CD8-positive, alpha-beta T cell (primary cell): ENCODE measurements at regions of chr3 and their contacts with region 1.

Region 1: DNA sequence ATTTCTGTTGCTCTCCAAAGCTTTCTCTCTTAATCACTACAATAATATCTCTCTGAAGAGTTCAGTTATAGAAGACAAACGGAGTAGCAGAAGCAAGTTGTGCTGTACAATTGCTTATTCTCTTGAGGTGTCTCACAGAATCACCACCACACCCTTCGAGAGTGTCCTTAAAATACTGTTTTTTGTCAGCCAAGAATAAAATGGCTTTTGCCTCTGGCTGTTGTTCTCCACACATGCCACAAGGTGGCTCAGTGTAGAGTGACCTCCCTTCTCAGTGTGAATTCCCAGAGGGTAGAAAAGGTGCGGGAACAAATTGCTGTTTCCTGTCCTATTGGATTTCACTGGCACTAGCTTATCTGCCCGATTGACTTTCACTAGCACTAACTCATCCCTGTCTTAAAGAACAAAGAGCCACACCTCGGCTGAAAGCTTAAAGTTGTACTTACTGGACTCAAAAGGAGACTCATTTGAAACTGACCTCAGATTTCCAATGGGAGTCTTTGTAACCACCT is 134.2 kb upstream of the SATB1 start:
- DNase-seq: peak in 5 of 9 experiments; percentile 28 to 73 (median 59)
- ATAC-seq: peak; percentile 39
- H3K4me3 ChIP-seq: no peak overlapping the region
- H3K4me3 Mint-ChIP-seq: peak overlapping the region; percentile 44
- H3K27ac ChIP-seq: no peak overlapping the region
- H3K27ac Mint-ChIP-seq: peak overlapping the region; percentile 69
- H3K4me1 ChIP-seq: peaks cover 25% of the 10 kb centered on the region
- H3K4me1 Mint-ChIP-seq: peaks cover 54% of the 10 kb centered on the region
- H3K27me3 ChIP-seq: no peaks in the 10 kb centered on the region
- H3K27me3 Mint-ChIP-seq: no peaks in the 10 kb centered on the region
- CTCF ChIP-seq: peak; percentile 73

Region 2: GRCh38 chr3:18351823-18352744 is 207.3 kb before region 1 on chr3:
- CTCF ChIA-PET with region 1: no interaction called
- POLR2A ChIA-PET with region 1: no interaction called
- intact Hi-C with region 1: loop called in 1 of 2 experiments (anchors 5 kb)
- DNase-seq: no peak
- ATAC-seq: no peak
- H3K4me3 ChIP-seq: no peak overlapping the region
- H3K4me3 Mint-ChIP-seq: no peak overlapping the region
- H3K27ac ChIP-seq: no peak overlapping the region
- H3K27ac Mint-ChIP-seq: peak overlapping the region; percentile 86
- H3K4me1 ChIP-seq: peaks cover 12% of the 10 kb centered on the region
- H3K4me1 Mint-ChIP-seq: peaks cover 55% of the 10 kb centered on the region
- H3K27me3 ChIP-seq: no peaks in the 10 kb centered on the region
- H3K27me3 Mint-ChIP-seq: no peaks in the 10 kb centered on the region
- CTCF ChIP-seq: no peak

Region 3: GRCh38 chr3:18454766-18455165 is 104.6 kb before region 1 on chr3:
- CTCF ChIA-PET with region 1: interaction called, 6 read pairs
- POLR2A ChIA-PET with region 1: no interaction called
- intact Hi-C with region 1: loop called (anchors 2 to 5 kb)
- DNase-seq: no peak
- ATAC-seq: no peak
- H3K4me3 ChIP-seq: no peak overlapping the region
- H3K4me3 Mint-ChIP-seq: no peak overlapping the region
- H3K27ac ChIP-seq: no peak overlapping the region
- H3K27ac Mint-ChIP-seq: no peak overlapping the region
- H3K4me1 ChIP-seq: peaks cover 11% of the 10 kb centered on the region
- H3K4me1 Mint-ChIP-seq: peaks cover 65% of the 10 kb centered on the region
- H3K27me3 ChIP-seq: no peaks in the 10 kb centered on the region
- H3K27me3 Mint-ChIP-seq: no peaks in the 10 kb centered on the region
- CTCF ChIP-seq: no peak

Region 4: GRCh38 chr3:18531662-18532236 is 27.6 kb before region 1 on chr3:
- CTCF ChIA-PET with region 1: interaction called, 5 read pairs
- POLR2A ChIA-PET with region 1: no interaction called
- intact Hi-C with region 1: loop called in 1 of 2 experiments (anchors 2 kb)
- DNase-seq: no peak
- ATAC-seq: no peak
- H3K4me3 ChIP-seq: no peak overlapping the region
- H3K4me3 Mint-ChIP-seq: no peak overlapping the region
- H3K27ac ChIP-seq: no peak overlapping the region
- H3K27ac Mint-ChIP-seq: no peak overlapping the region
- H3K4me1 ChIP-seq: no peaks in the 10 kb centered on the region
- H3K4me1 Mint-ChIP-seq: peaks cover 10% of the 10 kb centered on the region
- H3K27me3 ChIP-seq: no peaks in the 10 kb centered on the region
- H3K27me3 Mint-ChIP-seq: no peaks in the 10 kb centered on the region
- CTCF ChIP-seq: no peak

Region 5: DNA sequence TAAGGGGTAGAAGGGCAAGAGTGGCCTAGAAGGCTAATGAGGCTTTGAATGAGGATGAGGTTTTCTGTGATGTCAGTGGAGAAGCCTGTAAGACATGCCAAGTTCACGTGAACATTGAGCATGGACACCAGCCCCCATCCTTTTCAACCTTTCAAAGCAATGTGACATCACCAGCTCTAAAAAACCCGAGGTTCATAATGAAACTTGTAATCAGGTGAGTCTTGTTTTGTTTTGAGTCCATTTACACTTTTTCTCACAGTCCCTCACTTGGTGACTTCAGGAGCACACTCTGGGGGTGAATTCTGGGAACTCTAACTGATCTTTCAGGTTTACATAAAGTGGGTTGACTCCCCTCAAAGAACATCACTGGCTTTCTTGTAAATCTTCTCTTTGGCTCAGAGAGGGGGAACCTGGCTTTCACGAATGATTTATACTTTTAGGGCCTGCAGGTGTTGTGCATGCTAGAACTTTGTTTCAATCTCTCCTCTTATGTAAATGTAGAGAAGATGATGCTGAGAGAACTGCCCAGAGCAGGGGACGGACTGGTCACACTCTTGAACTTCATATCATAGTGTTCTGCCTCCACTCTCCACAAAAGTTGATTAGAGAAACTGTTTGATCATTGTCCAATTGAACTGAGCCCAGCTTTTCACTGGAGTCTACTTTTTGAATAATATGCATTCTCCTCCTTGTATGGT is 90.4 kb after region 1 on chr3:
- CTCF ChIA-PET with region 1: no interaction called
- POLR2A ChIA-PET with region 1: no interaction called
- intact Hi-C with region 1: loop called in 1 of 2 experiments (anchors 10 kb)
- DNase-seq: peak in 4 of 9 experiments; percentile 13 to 50 (median 27)
- ATAC-seq: peak; percentile 61
- H3K4me3 ChIP-seq: no peak overlapping the region
- H3K4me3 Mint-ChIP-seq: peak overlapping the region; percentile 7
- H3K27ac ChIP-seq: no peak overlapping the region
- H3K27ac Mint-ChIP-seq: peak overlapping the region; percentile 64
- H3K4me1 ChIP-seq: peaks cover 10% of the 10 kb centered on the region
- H3K4me1 Mint-ChIP-seq: peaks cover 24% of the 10 kb centered on the region
- H3K27me3 ChIP-seq: no peaks in the 10 kb centered on the region
- H3K27me3 Mint-ChIP-seq: no peaks in the 10 kb centered on the region
- CTCF ChIP-seq: no peak

Region 6: GRCh38 chr3:18735005-18735404 is 175.6 kb after region 1 on chr3:
- CTCF ChIA-PET with region 1: interaction called, 13 read pairs
- POLR2A ChIA-PET with region 1: no interaction called
- intact Hi-C with region 1: no loop called
- DNase-seq: no peak
- ATAC-seq: no peak
- H3K4me3 ChIP-seq: no peak overlapping the region
- H3K4me3 Mint-ChIP-seq: no peak overlapping the region
- H3K27ac ChIP-seq: no peak overlapping the region
- H3K27ac Mint-ChIP-seq: no peak overlapping the region
- H3K4me1 ChIP-seq: peaks cover 27% of the 10 kb centered on the region
- H3K4me1 Mint-ChIP-seq: peaks cover 60% of the 10 kb centered on the region
- H3K27me3 ChIP-seq: no peaks in the 10 kb centered on the region
- H3K27me3 Mint-ChIP-seq: no peaks in the 10 kb centered on the region
- CTCF ChIP-seq: no peak

Region 7: DNA sequence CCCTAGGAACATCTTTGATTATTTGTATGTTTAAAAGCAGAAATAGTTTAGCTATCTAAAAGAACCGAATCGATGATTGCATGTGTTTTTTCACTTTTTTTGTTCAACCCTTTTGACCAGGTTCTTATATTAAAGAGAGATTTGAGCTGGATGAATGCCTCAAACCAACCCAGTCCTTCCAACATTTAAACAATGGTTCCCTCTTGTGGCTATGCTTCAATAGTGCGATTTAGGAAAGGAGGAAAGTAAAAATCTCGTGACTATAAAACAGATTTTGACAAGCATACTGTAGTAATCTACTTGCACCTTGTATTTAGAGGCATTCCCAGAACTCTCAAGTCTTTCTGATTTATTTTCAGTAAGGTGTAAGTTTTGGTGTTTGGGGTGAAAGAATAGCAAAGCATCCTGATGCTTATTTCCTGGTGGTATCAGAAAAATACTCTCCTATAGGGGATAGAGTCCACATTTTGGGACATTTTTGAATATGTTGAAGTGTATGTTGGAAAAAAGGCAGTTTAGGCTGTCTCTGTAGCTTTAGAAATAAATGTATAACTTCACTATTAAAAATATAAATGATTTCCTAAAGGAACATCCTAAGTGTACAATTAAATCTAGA is 429.3 kb after region 1 on chr3:
- CTCF ChIA-PET with region 1: interaction called, 3 read pairs
- POLR2A ChIA-PET with region 1: no interaction called
- intact Hi-C with region 1: loop called in 1 of 2 experiments (anchors 5 kb)
- DNase-seq: peak in 2 of 9 experiments; percentile 40 to 61
- ATAC-seq: peak; percentile 61
- H3K4me3 ChIP-seq: no peak overlapping the region
- H3K4me3 Mint-ChIP-seq: peak overlapping the region; percentile 7
- H3K27ac ChIP-seq: no peak overlapping the region
- H3K27ac Mint-ChIP-seq: no peak overlapping the region
- H3K4me1 ChIP-seq: peaks cover 3% of the 10 kb centered on the region
- H3K4me1 Mint-ChIP-seq: peaks cover 14% of the 10 kb centered on the region
- H3K27me3 ChIP-seq: peaks cover 0 to 3% of the 10 kb centered on the region in 2 experiments
- H3K27me3 Mint-ChIP-seq: peaks cover 9% of the 10 kb centered on the region
- CTCF ChIP-seq: peak; percentile 91